ENCODE measurements at regions of chr2 and their contacts with region 1.

Region 1: DNA sequence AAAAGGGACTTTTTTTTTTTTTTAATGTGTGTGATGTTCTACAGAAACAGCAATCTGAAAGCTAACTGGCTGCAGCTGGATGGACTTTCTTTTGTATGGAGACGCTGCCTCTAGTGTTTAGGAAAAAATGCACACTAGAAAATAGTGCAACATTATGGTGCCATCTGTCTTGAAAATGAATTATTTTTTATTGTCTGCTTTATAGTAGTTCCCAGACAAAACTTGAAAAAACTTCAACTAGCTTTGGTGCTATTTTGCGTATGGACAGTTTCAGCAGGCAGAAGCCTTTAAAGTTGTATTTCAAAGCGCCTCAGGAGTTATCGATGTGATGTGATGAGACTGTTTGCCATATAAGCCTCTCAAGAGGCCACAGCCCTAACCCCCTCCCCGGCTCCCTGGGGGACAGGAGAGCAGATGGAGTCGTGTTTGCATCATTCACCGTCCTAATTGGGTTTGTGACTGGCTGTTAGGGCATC is 86.9 kb downstream of the LTBP1 start:
- DNase-seq: peak in 1 of 4 experiments; percentile 38
- ATAC-seq: peak; percentile 87
- H3K4me3 ChIP-seq: no peak overlapping the region
- H3K27ac ChIP-seq: no peak overlapping the region
- H3K4me1 ChIP-seq: no peaks in the 10 kb centered on the region; a peak in 1 of 5 replicates
- H3K27me3 ChIP-seq: no peaks in the 10 kb centered on the region
- CTCF ChIP-seq: peak; percentile 61 to 99 (median 97)
- EP300 ChIP-seq: no peak
- POLR2A ChIP-seq: no peak
- RAD21 ChIP-seq: peak; percentile 78 to 88

Region 2: DNA sequence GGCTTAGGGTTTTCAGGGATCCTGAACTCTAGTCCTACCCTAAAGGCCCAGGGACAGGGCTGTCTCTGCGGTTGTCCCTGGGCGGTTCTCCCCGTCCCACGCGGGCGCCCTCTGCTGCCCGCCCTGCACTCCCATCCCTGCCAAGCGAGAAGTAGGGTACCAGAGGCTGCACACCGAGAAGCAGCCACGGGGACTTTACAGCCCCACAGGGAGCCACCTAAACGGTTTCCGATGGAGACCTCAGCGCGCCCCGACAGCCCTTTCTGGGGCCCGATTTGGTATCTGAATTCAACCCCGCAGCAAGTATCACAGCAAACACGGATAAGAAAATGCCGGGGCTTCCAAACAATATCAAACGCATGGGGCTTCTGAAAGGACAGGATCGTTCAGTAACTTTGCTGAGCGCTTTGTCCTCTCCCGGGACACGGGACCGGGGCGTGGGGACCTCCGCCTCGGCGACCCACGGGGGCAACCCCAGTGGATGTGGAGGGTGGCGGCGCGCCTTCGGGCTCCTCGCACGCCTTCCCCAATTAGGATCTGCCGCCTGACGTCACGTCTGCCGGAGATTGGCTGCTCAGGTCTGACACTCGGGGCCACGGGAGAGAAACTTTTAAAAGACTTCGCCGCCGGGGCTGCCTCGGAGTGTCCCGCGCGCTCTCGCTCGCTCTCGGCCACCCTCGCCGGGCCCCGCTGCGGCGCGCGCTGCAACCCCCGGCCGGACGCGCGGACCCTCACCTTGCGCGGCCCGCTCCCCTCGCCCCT is 87.1 kb before region 1 on chr2 and contains the start of gene LTBP1:
- CTCF ChIA-PET with region 1: no interaction called
- POLR2A ChIA-PET with region 1: no interaction called
- in situ Hi-C with region 1: no loop called
- intact Hi-C with region 1: loop called (anchors 2 kb)
- DNase-seq: peak; percentile 70 to 85 (median 77)
- ATAC-seq: peak; percentile 88
- H3K4me3 ChIP-seq: peak within 1 kb of the TSS; percentile 64
- H3K27ac ChIP-seq: peak within 1 kb of the TSS; percentile 70
- H3K4me1 ChIP-seq: peaks cover 27 to 29% of the 10 kb centered on the region in 2 experiments; a peak in 4 of 5 replicates
- H3K27me3 ChIP-seq: no peaks in the 10 kb centered on the region
- CTCF ChIP-seq: peak; percentile 79 to 92 (median 84)
- EP300 ChIP-seq: no peak
- POLR2A ChIP-seq: no peak
- RAD21 ChIP-seq: peak; percentile 74 to 82
- polyA plus RNA-seq, gene LTBP1: 4.3 to 5.2 TPM

Region 3: GRCh38 chr2:33372940-33373553 is 339.4 kb after region 1 on chr2:
- CTCF ChIA-PET with region 1: interaction called, 5 read pairs
- POLR2A ChIA-PET with region 1: no interaction called
- in situ Hi-C with region 1: no loop called
- intact Hi-C with region 1: loop called (anchors 2 kb)
- DNase-seq: peak; percentile 43 to 63 (median 58)
- ATAC-seq: peak; percentile 62
- H3K4me3 ChIP-seq: no peak overlapping the region
- H3K27ac ChIP-seq: no peak overlapping the region
- H3K4me1 ChIP-seq: no peaks in the 10 kb centered on the region; a peak in 1 of 5 replicates
- H3K27me3 ChIP-seq: no peaks in the 10 kb centered on the region
- CTCF ChIP-seq: peak; percentile 54 to 78 (median 73); a peak in 5 of 6 replicates
- EP300 ChIP-seq: no peak
- POLR2A ChIP-seq: no peak
- RAD21 ChIP-seq: peak; percentile 81 to 83

Region 4: GRCh38 chr2:33395655-33396249 is 362.1 kb after region 1 on chr2:
- CTCF ChIA-PET with region 1: no interaction called
- POLR2A ChIA-PET with region 1: no interaction called
- in situ Hi-C with region 1: no loop called
- intact Hi-C with region 1: loop called (anchors 5 kb)
- DNase-seq: peak; percentile 52 to 63 (median 55)
- ATAC-seq: peak; percentile 86
- H3K4me3 ChIP-seq: no peak overlapping the region
- H3K27ac ChIP-seq: no peak overlapping the region
- H3K4me1 ChIP-seq: peaks cover 0 to 2% of the 10 kb centered on the region in 2 experiments; a peak in 1 of 5 replicates
- H3K27me3 ChIP-seq: no peaks in the 10 kb centered on the region
- CTCF ChIP-seq: peak; percentile 67 to 79 (median 74); a peak in 5 of 6 replicates
- EP300 ChIP-seq: no peak
- POLR2A ChIP-seq: no peak
- RAD21 ChIP-seq: peak; percentile 48 to 73

Region 5: GRCh38 chr2:33583194-33583938 is 549.7 kb after region 1 on chr2:
- CTCF ChIA-PET with region 1: interaction called, 7 read pairs
- POLR2A ChIA-PET with region 1: no interaction called
- in situ Hi-C with region 1: no loop called
- intact Hi-C with region 1: loop called (anchors 5 kb)
- DNase-seq: peak; percentile 23 to 50 (median 34)
- ATAC-seq: peak; percentile 75
- H3K4me3 ChIP-seq: no peak overlapping the region
- H3K27ac ChIP-seq: no peak overlapping the region
- H3K4me1 ChIP-seq: no peaks in the 10 kb centered on the region
- H3K27me3 ChIP-seq: no peaks in the 10 kb centered on the region
- CTCF ChIP-seq: peak; percentile 59 to 83 (median 64); a peak in 5 of 6 replicates
- EP300 ChIP-seq: no peak
- POLR2A ChIP-seq: no peak
- RAD21 ChIP-seq: peak; percentile 92 to 96

Measured in K562 (cell line).